ENCODE measurements at regions of chr14 and their contacts with region 1.

Region 1: DNA sequence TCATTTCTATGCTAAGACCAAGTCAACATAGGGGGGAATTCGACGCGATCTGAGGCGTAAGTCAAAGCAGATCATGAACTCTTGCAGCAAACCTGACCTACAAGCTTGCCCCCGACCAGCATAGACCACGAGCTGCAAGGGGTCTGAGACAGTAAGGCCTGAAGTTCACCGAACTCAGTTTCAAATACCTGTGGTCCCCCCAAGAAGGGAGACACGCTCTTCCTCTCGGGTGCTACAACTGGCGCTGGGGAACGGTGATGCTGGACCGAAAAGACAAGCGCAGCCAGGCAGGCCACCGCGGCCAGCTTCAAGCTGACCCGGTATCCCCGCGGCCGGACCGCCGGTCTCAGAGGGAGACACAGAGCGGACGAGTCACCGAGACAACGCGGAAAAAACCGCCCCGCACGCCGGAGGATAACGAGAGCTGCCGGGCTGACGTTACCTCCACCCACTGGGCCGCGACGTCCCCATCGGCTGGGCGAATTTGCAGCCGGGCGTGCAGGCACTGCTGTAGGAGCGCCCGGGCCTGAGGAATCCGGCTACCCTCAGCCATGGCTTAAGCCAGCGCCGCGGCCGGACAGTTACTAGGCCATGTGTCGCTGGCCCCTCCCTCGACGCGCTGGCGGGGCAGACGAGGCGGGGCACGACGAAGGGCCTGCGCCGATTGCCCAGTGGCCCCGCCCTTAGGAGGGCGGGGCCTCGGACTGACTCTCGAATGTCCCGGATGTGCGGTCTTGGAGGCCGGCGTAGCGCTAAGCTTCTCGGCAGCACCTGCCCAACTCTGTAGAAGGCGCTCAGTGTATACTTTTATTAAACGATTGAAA is at the start of gene DTD2:
- DNase-seq: peak; percentile 95
- H3K4me3 ChIP-seq: peak within 1 kb of the TSS; percentile 34 to 64 (median 63)
- H3K27ac ChIP-seq: peak within 1 kb of the TSS; percentile 70
- H3K4me1 ChIP-seq: peaks cover 2% of the 10 kb centered on the region
- H3K27me3 ChIP-seq: no peaks in the 10 kb centered on the region
- CTCF ChIP-seq: no peak
- POLR2A ChIP-seq: peak; percentile 88
- total RNA-seq, gene DTD2: 10.8 and 14.4 TPM in 2 replicates

Region 2: DNA sequence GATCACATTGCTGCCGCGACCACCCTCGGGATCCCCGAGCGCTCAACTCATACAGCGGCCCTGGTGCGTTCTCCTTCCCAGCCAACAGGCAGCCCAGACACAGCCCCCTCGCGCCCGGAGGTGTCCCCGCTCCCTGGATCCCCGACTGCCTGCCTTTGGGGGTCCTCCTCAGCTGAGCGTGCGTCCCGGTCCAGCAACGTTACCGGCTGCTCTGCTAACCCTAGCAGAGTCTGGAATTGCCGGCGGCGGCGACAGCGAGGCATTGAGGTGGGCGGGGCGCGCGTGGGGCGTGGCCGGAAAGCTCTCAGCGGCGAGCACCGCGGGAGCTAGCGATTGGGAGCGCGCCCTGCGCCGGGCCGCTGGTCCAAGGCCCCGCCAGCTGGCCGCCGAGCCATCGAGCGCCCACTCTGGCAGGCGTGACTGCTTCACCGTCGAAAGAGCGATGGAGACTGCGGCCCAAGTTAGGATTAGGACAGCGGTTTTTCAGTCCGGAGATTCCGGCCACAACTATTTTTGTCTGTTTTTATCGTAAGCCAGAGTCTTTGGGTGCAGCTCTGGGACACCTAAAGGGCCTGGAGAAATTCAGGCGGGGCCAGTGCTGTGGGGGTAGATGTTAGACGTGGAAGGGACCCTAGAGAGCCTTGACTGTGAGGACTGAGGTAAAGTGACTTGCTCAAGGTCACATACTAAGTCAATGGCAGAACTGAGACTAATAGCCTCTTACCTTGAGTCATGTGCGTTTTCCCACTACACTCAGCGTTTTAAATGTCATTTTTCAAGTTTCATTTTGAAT is 36.5 kb before region 1 on chr14 and contains the start of gene HEATR5A:
- CTCF ChIA-PET with region 1: interaction called, 3 read pairs
- POLR2A ChIA-PET with region 1: interaction called, 15 read pairs
- dilution Hi-C with region 1: no loop called
- intact Hi-C with region 1: loop called (anchors 1 kb)
- DNase-seq: peak; percentile 96
- H3K4me3 ChIP-seq: peak within 1 kb of the TSS; percentile 83 to 86 (median 83)
- H3K27ac ChIP-seq: peak within 1 kb of the TSS; percentile 60
- H3K4me1 ChIP-seq: peaks cover 13% of the 10 kb centered on the region
- H3K27me3 ChIP-seq: no peaks in the 10 kb centered on the region
- CTCF ChIP-seq: peak in 1 of 2 donors; percentile 27
- POLR2A ChIP-seq: peak; percentile 99
- total RNA-seq, gene HEATR5A: 37.0 and 45.3 TPM in 2 replicates

Region 3: GRCh38 chr14:31561155-31561846 is 104.2 kb after region 1 on chr14 and contains the start of gene NUBPL:
- CTCF ChIA-PET with region 1: no interaction called
- POLR2A ChIA-PET with region 1: no interaction called
- dilution Hi-C with region 1: no loop called
- intact Hi-C with region 1: loop called (anchors 2 kb)
- DNase-seq: peak; percentile 95
- H3K4me3 ChIP-seq: peak within 1 kb of the TSS; percentile 32 to 80 (median 73)
- H3K27ac ChIP-seq: peak within 1 kb of the TSS; percentile 51
- H3K4me1 ChIP-seq: peaks cover 4% of the 10 kb centered on the region
- H3K27me3 ChIP-seq: peaks cover 0 to 4% of the 10 kb centered on the region in 2 experiments
- CTCF ChIP-seq: no peak
- POLR2A ChIP-seq: peak; percentile 78
- total RNA-seq, gene NUBPL: 8.2 and 12.3 TPM in 2 replicates

Measured in endothelial cell of umbilical vein (primary cell).